GM10248 (cell line): ENCODE measurements at regions of chr2 and their contacts with region 1.

Region 1: DNA sequence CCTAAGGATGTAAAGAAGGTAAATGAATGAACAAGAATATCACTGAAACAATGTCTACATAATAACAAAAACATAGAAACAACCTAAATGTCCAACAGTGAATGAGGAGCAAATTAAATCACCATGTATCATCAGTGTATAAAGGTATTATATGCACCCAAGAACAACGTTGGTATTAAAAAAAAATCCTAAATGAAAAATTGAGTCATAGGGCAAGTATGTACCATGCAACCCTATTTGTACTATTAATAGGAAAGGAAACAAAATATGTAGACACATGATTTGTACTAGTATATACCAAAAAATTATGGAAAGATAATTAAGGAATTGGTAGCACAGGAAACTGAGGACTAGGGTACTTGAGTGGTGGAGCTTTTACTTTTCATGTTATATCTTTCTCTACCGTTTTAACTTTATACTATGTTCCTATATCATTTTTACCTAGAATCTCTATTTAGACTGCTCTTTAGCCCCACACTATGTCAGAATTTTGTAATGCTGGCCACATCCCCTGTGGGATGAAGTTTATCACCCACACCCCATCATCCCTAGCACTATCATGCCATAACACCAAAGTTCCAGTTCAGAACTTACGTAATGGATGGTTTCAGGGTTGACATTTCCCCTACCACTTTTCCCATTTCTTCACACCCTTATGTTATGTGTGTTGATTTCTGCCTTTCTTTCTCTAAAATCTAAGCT is 25.6 kb downstream of the IKZF2 start:
- DNase-seq: no peak
- CTCF ChIP-seq: peak; percentile 15

Region 2: GRCh38 chr2:213137064-213137463 is 11.3 kb after region 1 on chr2:
- CTCF ChIA-PET with region 1: interaction called, 25 read pairs
- POLR2A ChIA-PET with region 1: no interaction called
- DNase-seq: no peak
- CTCF ChIP-seq: no peak